ENCODE measurements at regions of chr21 and their contacts with region 1.

Region 1: GRCh38 chr21:33542640-33543504 is at the start of gene SON:
- DNase-seq: peak; percentile 99
- H3K4me3 ChIP-seq: peak within 1 kb of the TSS; percentile 71 to 98 (median 93)
- H3K27ac ChIP-seq: peak within 1 kb of the TSS; percentile 93
- H3K4me1 ChIP-seq: peaks cover 25% of the 10 kb centered on the region
- H3K27me3 ChIP-seq: no peaks in the 10 kb centered on the region
- CTCF ChIP-seq: no peak
- POLR2A ChIP-seq: peak; percentile 91
- total RNA-seq, gene SON: 297 and 304 TPM in 2 replicates

Region 2: DNA sequence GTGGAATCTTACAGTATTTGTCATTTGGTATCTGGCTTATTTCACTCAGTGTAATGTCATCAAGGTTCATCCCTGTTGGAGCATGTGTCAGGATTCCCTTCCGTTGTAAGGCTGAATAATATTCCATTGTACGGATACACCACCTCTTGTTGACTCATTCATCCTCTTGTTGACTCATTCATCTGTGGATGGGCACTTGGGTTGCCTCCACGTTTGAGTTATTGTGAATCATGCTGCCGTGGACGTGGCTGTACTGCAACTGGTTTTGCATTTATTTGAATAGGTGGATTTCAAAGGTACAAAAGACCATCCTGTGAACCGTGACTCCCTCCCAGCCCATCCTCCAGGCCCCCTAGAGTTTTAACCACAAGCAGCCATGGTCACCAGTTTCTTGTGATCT is 945.7 kb before region 1 on chr21:
- CTCF ChIA-PET with region 1: no interaction called
- POLR2A ChIA-PET with region 1: no interaction called
- dilution Hi-C with region 1: no loop called
- intact Hi-C with region 1: no loop called
- DNase-seq: peak; percentile 85
- H3K4me3 ChIP-seq: no peak overlapping the region
- H3K27ac ChIP-seq: peak overlapping the region; percentile 68
- H3K4me1 ChIP-seq: peaks cover 9% of the 10 kb centered on the region
- H3K27me3 ChIP-seq: no peaks in the 10 kb centered on the region
- CTCF ChIP-seq: no peak
- POLR2A ChIP-seq: no peak

Region 3: DNA sequence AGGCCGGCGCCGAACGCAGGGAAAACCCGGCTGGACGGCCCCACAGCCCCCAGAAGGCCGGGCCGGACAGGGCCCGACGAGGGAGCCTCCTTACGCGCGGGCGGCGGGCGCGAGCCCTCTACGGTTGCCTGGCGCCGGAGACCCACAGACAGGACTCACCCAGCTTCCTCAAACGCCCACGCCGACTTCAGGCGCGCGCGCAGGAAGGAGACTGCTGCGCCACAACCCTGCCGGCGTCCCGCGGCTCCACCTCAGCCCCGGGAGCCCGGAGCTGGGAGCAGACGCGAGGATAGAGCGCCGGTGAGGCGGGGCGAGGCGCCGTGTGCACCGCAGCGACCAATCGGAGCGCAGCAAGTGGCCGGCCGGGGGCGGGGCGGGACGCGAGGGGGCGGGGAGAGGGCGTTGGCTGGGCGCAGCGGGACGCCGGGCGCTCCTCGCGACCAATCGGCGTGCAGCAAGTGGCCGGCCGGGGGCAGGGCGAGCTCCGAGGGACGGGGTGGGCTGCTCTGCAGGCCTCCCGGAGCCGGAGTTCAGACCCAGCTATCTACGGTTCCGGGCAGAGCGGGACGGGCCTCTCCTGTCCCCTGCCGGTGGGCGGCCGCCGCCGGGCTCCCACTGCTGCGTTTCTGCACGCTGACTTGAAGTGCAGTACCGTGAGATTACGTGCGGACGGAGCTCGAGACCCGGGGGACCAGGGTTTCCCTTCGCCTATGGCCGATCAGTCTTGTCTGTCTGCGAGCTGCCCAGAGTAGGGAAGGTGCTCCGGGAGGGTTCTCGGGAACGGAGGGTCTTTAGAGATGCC is 63.0 kb before region 1 on chr21 and contains the start of gene TMEM50B:
- CTCF ChIA-PET with region 1: no interaction called
- POLR2A ChIA-PET with region 1: interaction called, 3 read pairs
- dilution Hi-C with region 1: no loop called
- intact Hi-C with region 1: loop called (anchors 2 kb)
- DNase-seq: peak; percentile 98
- H3K4me3 ChIP-seq: peak within 1 kb of the TSS; percentile 83 to 95 (median 91)
- H3K27ac ChIP-seq: peak within 1 kb of the TSS; percentile 72
- H3K4me1 ChIP-seq: peaks cover 4% of the 10 kb centered on the region
- H3K27me3 ChIP-seq: peaks cover 3% of the 10 kb centered on the region in 2 experiments
- CTCF ChIP-seq: peak; percentile 27 to 59
- POLR2A ChIP-seq: peak; percentile 94
- total RNA-seq, gene TMEM50B: 29.3 and 29.7 TPM in 2 replicates

Region 4: DNA sequence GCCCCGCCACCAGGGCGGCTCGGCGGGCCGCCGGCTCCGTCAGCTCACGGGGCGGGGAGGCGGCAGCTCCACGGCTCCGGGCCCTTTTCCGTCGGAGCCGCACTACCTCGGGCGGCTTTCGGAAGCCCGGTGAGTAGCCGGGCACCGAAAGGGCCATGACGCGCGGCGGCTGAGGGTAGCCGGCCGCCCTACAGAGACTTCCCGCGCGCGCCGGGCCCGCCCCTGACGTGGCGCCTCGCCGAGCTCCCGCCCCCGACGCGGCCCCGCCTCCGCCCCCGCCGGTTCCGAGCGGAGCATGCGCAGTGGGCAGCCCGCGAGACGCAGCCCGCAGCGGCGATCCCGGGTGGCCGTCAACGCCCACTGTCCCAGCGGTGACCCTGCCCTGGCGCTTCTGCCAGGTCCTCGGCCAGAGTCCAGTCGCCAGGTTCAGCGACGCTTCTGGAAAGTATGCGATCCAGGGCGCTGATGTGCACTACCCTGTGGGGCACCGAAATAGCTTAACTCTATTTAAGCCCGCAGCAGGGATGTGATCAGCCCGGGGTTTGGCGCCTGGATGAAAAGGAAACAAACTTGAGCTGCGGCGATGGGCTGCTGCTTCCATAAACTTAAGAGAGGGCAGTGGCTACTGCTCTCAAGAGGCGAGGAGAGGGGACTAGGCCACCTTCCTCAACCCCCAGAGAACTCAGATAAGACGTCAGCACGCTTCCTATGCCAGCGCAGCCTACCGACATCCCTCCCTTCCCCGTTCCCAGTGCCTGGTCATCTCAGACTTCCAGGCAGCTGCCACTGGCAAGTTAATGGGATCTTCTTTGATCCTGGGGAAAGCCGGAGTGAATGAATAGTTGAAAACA is 45.8 kb after region 1 on chr21 and contains the start of gene DONSON:
- CTCF ChIA-PET with region 1: no interaction called
- POLR2A ChIA-PET with region 1: interaction called, 4 read pairs
- dilution Hi-C with region 1: no loop called
- intact Hi-C with region 1: loop called (anchors 2 kb)
- DNase-seq: peak; percentile 89
- H3K4me3 ChIP-seq: peak within 1 kb of the TSS; percentile 77 to 95 (median 84)
- H3K27ac ChIP-seq: peak within 1 kb of the TSS; percentile 69
- H3K4me1 ChIP-seq: peaks cover 18% of the 10 kb centered on the region
- H3K27me3 ChIP-seq: no peaks in the 10 kb centered on the region
- CTCF ChIP-seq: peak in 1 of 2 donors; percentile 19
- POLR2A ChIP-seq: peak; percentile 82
- total RNA-seq, gene DONSON: 25.7 and 29.4 TPM in 2 replicates

Region 5: GRCh38 chr21:33817663-33818451 is 275.0 kb after region 1 on chr21:
- CTCF ChIA-PET with region 1: no interaction called
- POLR2A ChIA-PET with region 1: no interaction called
- dilution Hi-C with region 1: no loop called
- intact Hi-C with region 1: no loop called
- DNase-seq: no peak
- H3K4me3 ChIP-seq: no peak overlapping the region
- H3K27ac ChIP-seq: no peak overlapping the region
- H3K4me1 ChIP-seq: peaks cover under 1% of the 10 kb centered on the region
- H3K27me3 ChIP-seq: no peaks in the 10 kb centered on the region
- CTCF ChIP-seq: no peak
- POLR2A ChIP-seq: no peak

Region 6: DNA sequence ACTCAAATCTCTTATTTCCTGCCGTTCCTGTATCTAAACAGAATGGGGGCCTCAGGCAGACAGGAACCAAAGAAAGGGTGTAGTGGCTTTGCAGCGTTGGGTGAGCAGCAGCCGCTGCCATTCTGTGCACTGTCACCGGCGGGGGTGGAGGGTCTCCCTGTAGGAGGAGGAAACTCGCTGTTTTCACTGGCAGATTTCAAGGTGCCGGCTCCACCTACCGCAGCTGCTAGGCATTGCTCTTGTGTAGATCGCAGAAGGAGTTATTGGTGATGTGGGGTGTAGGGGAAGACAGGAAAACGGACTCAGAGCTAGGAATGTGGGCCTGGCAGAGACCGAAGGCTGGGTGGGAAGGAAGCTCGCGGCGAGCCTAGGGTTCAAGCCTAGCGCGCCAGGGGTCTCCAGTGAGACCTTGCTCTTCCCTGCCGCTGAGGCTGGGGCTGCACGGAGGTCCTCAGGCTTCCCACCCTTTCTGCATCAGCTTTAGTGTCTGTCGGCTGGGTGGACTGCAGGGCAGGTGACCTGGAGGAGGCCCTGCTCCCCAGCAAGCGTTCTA is 351.9 kb after region 1 on chr21:
- CTCF ChIA-PET with region 1: interaction called, 3 read pairs
- POLR2A ChIA-PET with region 1: no interaction called
- dilution Hi-C with region 1: no loop called
- intact Hi-C with region 1: loop called (anchors 2 kb)
- DNase-seq: peak; percentile 92
- H3K4me3 ChIP-seq: peak overlapping the region in 1 of 3 experiments; percentile 3
- H3K27ac ChIP-seq: no peak overlapping the region
- H3K4me1 ChIP-seq: peaks cover 30% of the 10 kb centered on the region
- H3K27me3 ChIP-seq: no peaks in the 10 kb centered on the region
- CTCF ChIP-seq: peak; percentile 75 to 78
- POLR2A ChIP-seq: no peak

Region 7: GRCh38 chr21:33914188-33914587 is 371.3 kb after region 1 on chr21:
- CTCF ChIA-PET with region 1: no interaction called
- POLR2A ChIA-PET with region 1: no interaction called
- dilution Hi-C with region 1: no loop called
- intact Hi-C with region 1: no loop called
- DNase-seq: no peak
- H3K4me3 ChIP-seq: no peak overlapping the region
- H3K27ac ChIP-seq: no peak overlapping the region
- H3K4me1 ChIP-seq: peaks cover 13% of the 10 kb centered on the region
- H3K27me3 ChIP-seq: no peaks in the 10 kb centered on the region
- CTCF ChIP-seq: no peak
- POLR2A ChIP-seq: no peak

Measured in endothelial cell of umbilical vein (primary cell).